Activated CD8-positive, alpha-beta memory T cell treated with anti-CD3 and anti-CD28 coated beads, Interleukin-2, amount 10 ng/mL, durations not matched to agents 7 days and 5 days (primary cell): ENCODE measurements at regions of chr13 and their contacts with region 1.

Region 1: GRCh38 chr13:21176220-21176982 is at the starts of genes MRPL57 and SKA3:
- DNase-seq: peak; percentile 96
- ATAC-seq: peak; percentile 95
- H3K4me3 Mint-ChIP-seq: peak within 1 kb of the TSS; percentile 99
- H3K27ac Mint-ChIP-seq: peak within 1 kb of the TSS; percentile 97
- H3K4me1 Mint-ChIP-seq: peaks cover 37% of the 10 kb centered on the region
- H3K27me3 Mint-ChIP-seq: no peaks in the 10 kb centered on the region
- total RNA-seq, gene MRPL57: 22.5 to 23.5 TPM
- total RNA-seq, gene SKA3: 36.6 to 39.6 TPM

Region 2: GRCh38 chr13:20942938-20943559 is 233.4 kb before region 1 on chr13:
- CTCF ChIA-PET with region 1: interaction called, 10 read pairs
- DNase-seq: no peak
- ATAC-seq: no peak
- H3K4me3 Mint-ChIP-seq: no peak overlapping the region
- H3K27ac Mint-ChIP-seq: no peak overlapping the region
- H3K4me1 Mint-ChIP-seq: peaks cover 9% of the 10 kb centered on the region
- H3K27me3 Mint-ChIP-seq: peaks cover 36% of the 10 kb centered on the region

Region 3: GRCh38 chr13:21218351-21219035 is 42.1 kb after region 1 on chr13:
- CTCF ChIA-PET with region 1: interaction called, 11 read pairs
- DNase-seq: peak; percentile 71
- ATAC-seq: peak; percentile 86
- H3K4me3 Mint-ChIP-seq: peak overlapping the region; percentile 28
- H3K27ac Mint-ChIP-seq: peak overlapping the region; percentile 85
- H3K4me1 Mint-ChIP-seq: peaks cover 22% of the 10 kb centered on the region
- H3K27me3 Mint-ChIP-seq: peaks cover 60% of the 10 kb centered on the region

Region 4: GRCh38 chr13:21287331-21287907 is 111.0 kb after region 1 on chr13:
- CTCF ChIA-PET with region 1: no interaction called
- DNase-seq: no peak
- ATAC-seq: no peak
- H3K4me3 Mint-ChIP-seq: no peak overlapping the region
- H3K27ac Mint-ChIP-seq: no peak overlapping the region
- H3K4me1 Mint-ChIP-seq: no peaks in the 10 kb centered on the region
- H3K27me3 Mint-ChIP-seq: peaks cover 28% of the 10 kb centered on the region

Region 5: DNA sequence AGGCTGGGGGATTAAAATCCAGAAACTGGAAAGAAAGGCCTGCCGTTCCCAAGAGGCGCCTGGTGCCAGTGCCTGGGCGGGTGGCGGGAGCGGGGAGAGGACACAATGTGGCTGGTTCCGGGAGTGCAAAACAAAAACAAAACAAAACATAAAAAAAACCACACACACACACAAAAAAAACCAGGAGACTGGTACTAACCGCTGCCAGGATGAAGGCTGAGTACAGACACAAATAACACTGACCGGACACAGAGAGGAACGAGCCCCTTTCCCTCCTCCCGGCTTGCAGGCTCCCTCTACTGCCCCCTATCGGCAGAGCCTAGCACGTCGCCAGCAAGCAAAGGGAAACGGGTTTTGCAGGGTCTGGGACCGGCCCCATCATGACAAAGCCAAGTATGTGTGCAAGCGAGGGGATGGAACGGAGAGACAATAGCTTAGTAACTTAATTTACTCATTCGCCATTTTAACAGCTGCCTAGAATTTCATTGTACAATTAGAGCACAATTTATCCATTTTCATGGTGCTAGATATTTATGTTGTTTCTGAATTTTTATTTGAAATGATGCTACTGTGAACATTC is 300.6 kb after region 1 on chr13:
- CTCF ChIA-PET with region 1: interaction called, 12 read pairs
- DNase-seq: peak; percentile 90
- ATAC-seq: peak; percentile 85
- H3K4me3 Mint-ChIP-seq: peak overlapping the region; percentile 79
- H3K27ac Mint-ChIP-seq: peak overlapping the region; percentile 67
- H3K4me1 Mint-ChIP-seq: peaks cover 25% of the 10 kb centered on the region
- H3K27me3 Mint-ChIP-seq: peaks cover 10% of the 10 kb centered on the region